PC-3 (cell line): ENCODE measurements at regions of chr19 and their contacts with region 1.

Region 1: DNA sequence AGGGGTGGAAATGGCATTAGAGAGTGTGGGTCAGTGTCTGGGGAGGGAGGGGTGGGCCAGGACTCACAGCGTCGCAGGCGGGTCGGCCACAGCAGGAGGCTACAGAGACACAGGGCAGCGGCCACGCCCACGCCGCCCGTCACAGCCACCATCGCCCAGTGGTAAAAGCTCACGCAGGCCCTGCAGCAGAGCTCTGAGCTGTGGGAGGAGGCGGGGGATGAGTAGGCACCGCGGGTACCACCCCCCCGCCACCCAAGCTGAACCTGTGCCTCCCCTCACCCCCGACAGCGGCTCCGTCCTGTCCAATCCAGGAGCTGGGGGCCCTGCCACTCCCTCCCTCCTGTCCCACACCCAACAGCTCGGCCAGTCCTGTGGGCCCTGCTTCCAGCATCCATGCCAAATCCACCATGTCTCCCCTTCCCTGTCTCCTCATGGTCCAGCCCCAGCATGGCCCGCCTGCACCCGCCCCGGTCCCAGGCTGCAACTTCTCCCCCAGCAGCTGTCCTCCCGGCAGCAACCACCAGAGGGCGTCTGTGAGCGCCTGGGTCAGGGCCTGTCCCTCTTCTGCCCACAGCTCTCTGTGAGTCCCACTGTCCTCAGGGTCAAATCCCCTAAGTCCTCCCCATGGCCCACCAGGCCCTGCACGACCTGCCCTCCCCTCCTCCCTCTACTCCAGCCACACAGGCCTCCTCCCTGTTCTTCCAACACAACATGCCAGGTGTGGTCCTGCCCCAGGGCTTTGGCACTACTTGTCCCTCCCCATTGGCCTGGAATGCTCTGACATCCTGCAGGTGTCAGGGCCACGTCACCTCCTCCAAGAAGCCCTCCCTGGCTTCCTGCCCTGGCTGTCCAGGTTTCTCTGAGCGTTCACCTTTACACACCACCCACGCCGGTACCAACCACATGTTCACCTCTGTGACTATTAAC is 6.0 kb downstream of the TEKTIP1 start:
- DNase-seq: peak; percentile 60
- ATAC-seq: peak; percentile 68
- H3K4me3 ChIP-seq: no peak overlapping the region
- H3K27ac ChIP-seq: no peak overlapping the region
- H3K4me1 ChIP-seq: no peaks in the 10 kb centered on the region
- H3K27me3 ChIP-seq: no peaks in the 10 kb centered on the region
- CTCF ChIP-seq: peak; percentile 85

Region 2: GRCh38 chr19:3556978-3557460 is 12.0 kb after region 1 on chr19:
- CTCF ChIA-PET with region 1: no interaction called
- POLR2A ChIA-PET with region 1: interaction called, 13 read pairs
- intact Hi-C with region 1: no loop called
- DNase-seq: peak; percentile 45
- ATAC-seq: peak; percentile 19
- H3K4me3 ChIP-seq: peak overlapping the region; percentile 91
- H3K27ac ChIP-seq: peak overlapping the region; percentile 30; the same call in 1 of the 2 replicates
- H3K4me1 ChIP-seq: peaks cover 13% of the 10 kb centered on the region; the same call in 1 of the 2 replicates
- H3K27me3 ChIP-seq: no peaks in the 10 kb centered on the region
- CTCF ChIP-seq: no peak